ENCODE measurements at regions of chr10 and their contacts with region 1.

Region 1: DNA sequence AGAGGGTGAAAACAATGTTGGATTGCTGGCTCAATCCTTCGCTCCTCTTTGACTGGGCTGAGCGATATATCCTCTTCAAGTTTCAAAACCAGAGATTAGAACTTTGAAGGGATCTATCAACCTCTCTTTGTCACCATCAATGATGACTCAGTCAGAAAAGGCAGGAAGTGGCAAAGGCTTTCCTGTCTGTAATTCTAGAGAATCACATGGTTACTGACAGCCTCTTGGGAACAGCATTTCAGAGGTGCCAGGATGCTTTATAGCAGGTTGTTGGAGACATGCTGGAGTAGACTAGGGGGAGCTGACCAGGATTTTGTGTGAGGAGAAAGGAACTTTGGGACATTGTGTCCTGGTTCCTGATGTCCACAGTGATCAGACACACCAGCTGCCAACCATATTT is 81.3 kb downstream of the PRKCQ start:
- DNase-seq: peak; percentile 63
- H3K4me3 Mint-ChIP-seq: peak overlapping the region; percentile 68
- H3K27ac Mint-ChIP-seq: peak overlapping the region; percentile 88
- H3K4me1 Mint-ChIP-seq: peaks cover 44% of the 10 kb centered on the region
- H3K27me3 Mint-ChIP-seq: no peaks in the 10 kb centered on the region

Region 2: GRCh38 chr10:6247041-6247712 is 251.6 kb before region 1 on chr10:
- intact Hi-C with region 1: no loop called
- DNase-seq: no peak
- H3K4me3 Mint-ChIP-seq: no peak overlapping the region
- H3K27ac Mint-ChIP-seq: no peak overlapping the region
- H3K4me1 Mint-ChIP-seq: peaks cover 7% of the 10 kb centered on the region
- H3K27me3 Mint-ChIP-seq: no peaks in the 10 kb centered on the region

Region 3: DNA sequence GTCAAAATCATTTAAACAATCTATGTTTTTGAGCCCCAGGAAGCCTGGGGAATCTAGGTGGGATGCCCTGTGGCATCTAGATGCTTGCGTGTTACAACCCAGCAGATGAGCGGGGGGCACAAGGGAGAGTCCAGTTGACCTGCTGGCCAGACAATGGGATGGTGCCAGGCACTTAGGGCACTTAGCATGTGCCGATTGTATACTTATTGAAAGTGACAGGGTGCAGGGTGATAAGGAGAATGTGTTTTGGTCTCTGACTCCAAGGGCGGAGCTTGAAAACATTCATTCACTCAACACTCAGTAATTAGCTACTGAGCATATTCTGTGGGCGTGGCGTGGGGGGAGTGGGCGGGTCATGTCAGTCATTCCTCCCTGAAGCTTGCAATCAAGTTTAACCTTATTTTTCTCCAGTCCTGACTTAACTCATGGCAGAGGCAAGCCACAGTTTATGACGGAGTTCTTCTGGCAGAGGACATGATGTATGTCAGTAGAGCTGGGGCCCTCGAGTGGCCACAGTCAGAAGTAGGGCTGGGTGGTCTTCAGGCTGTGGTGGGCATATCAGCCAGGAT is 33.8 kb before region 1 on chr10:
- intact Hi-C with region 1: loop called (anchors 1 kb)
- DNase-seq: no peak
- H3K4me3 Mint-ChIP-seq: no peak overlapping the region
- H3K27ac Mint-ChIP-seq: no peak overlapping the region
- H3K4me1 Mint-ChIP-seq: peaks cover 38% of the 10 kb centered on the region
- H3K27me3 Mint-ChIP-seq: no peaks in the 10 kb centered on the region

Region 4: DNA sequence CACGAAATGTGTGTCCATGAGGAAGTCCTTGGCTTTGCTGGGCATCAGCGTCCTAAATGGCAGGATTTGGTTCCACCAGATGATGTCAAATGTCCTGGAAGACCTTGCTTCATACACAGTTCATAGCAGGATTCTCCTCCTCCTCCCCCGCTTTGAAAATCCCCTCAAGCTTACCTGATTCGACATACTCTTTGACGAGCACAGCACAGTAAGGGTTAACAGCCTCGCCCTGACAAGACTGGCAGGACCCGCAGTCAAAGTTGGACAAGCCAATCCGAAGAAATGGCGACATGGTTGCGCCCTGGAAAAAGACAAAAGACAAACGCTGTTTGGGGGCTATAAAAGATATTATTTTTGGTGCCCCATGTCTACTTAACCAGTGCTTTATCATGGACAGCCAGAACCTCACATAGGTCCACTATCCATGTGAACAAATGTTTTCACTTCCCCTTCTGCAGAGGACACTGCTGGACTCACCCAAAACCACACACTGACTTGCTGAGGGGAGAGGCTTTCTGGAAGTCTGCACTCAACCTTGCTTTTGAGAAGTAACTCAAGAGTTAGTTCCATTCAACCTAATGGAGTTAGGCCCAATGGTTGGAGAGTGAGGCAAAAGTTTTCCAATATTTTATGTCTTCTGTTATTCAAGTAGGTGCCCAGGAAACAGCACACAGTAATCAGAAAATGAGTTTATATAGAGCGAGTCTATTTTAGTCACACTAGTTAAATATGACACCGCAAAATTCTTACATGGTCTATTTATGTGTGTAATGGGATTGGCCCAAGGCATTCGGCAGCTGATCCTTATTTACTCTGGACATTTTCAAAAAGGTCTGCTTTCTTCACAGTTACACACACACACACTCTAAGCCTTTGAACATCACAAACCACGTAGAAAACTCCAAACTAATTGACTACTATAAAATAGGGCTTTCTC is 16.3 kb after region 1 on chr10:
- intact Hi-C with region 1: loop called (anchors 1 kb)
- DNase-seq: no peak
- H3K4me3 Mint-ChIP-seq: no peak overlapping the region
- H3K27ac Mint-ChIP-seq: no peak overlapping the region
- H3K4me1 Mint-ChIP-seq: peaks cover 90% of the 10 kb centered on the region
- H3K27me3 Mint-ChIP-seq: peaks cover 2% of the 10 kb centered on the region

Region 5: GRCh38 chr10:6612371-6612770 is 113.6 kb after region 1 on chr10:
- intact Hi-C with region 1: no loop called
- DNase-seq: no peak
- H3K4me3 Mint-ChIP-seq: peak overlapping the region; percentile 45
- H3K27ac Mint-ChIP-seq: peak overlapping the region; percentile 83
- H3K4me1 Mint-ChIP-seq: peaks cover 89% of the 10 kb centered on the region
- H3K27me3 Mint-ChIP-seq: no peaks in the 10 kb centered on the region

Measured in activated T-helper 1 cell treated with anti-CD3 and anti-CD28 coated beads, Interleukin-12 subunit alpha, Interleukin-12 subunit beta, Interleukin-2, Interleukin-4 antibody, amounts not matched to agents 30 ng/mL and 10 ng/mL and 1 ng/mL, durations not matched to agents 14 hours and 24 hours and 36 hours (primary cell).